ENCODE measurements at regions of chr20 and their contacts with region 1.

Region 1: GRCh38 chr20:34312544-34313217 is 9.5 kb upstream of the AHCY start:
- DNase-seq: peak; percentile 89
- CTCF ChIP-seq: peak; percentile 99

Region 2: GRCh38 chr20:34473262-34473883 is 160.7 kb after region 1 on chr20:
- in situ Hi-C with region 1: loop called (anchors 10 kb)
- DNase-seq: peak; percentile 59
- CTCF ChIP-seq: peak; percentile 55

Region 3: DNA sequence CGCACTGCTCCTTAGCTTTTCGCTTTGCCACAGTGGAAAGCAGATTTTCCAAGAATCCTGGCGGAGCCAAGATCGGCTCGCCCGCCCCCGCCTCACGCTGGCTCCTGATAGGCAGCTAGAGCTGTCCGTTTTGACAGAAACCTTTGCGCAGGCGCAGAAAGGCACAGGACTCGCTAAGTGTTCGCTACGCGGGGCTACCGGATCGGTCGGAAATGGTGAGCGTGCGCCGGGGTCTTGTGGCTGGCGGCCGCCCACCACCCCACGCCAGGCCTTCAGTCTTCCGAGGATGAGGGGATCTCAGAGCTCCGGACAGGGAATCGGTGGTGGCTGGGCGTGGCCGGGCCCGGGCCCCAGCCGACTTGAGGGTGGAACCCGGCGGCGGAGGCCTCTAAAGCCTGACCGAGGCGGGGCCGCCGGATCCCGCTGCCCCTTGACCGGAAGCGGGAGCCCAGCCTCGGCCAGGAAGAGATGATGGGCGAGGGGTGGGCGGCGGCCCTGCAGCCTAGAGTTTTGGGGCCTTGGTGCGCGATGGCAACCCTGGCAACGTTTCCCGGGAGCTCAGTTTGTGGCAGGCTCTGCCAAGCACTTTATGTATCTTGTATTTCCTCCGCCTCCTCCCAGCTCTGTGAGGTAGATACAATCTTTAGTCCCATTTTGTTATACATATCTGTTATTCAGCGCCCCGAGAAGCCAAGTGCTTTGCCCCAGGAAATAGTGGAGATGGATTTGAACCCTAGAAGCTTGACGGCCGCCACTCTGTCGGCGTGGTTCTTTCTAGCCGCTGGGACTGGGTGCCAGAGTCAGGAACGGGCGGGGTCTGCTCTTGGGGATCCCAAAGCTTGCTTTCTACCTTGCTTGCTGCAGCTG is 203.8 kb after region 1 on chr20 and contains the start of gene DYNLRB1:
- in situ Hi-C with region 1: loop called (anchors 5 kb)
- DNase-seq: peak; percentile 93
- CTCF ChIP-seq: no peak

Region 4: GRCh38 chr20:34579191-34579978 is 266.7 kb after region 1 on chr20:
- in situ Hi-C with region 1: no loop called
- DNase-seq: no peak
- CTCF ChIP-seq: no peak